Heart right ventricle (tissue), 16 donors: ENCODE measurements at regions of chr19 and their contacts with region 1.

Region 1: GRCh38 chr19:5880604-5881078 is 10.3 kb upstream of the FUT5 start:
- DNase-seq: peak; percentile 75 to 76
- ATAC-seq: peak; percentile 74 to 98 (median 92)
- H3K4me3 ChIP-seq: no peak overlapping the region
- H3K27ac ChIP-seq: peak overlapping the region in 7 of 10 donors; percentile 11 to 76 (median 39)
- H3K4me1 ChIP-seq: peaks cover 0 to 15% (median 9%) of the 10 kb centered on the region in 9 donors
- H3K27me3 ChIP-seq: peaks cover 0 to 19% (median 12%) of the 10 kb centered on the region in 7 donors
- CTCF ChIP-seq: no peak

Region 2: GRCh38 chr19:5827891-5828660 is 52.6 kb before region 1 on chr19:
- intact Hi-C with region 1: loop called in 3 of 10 experiments (anchors 5 to 10 kb)
- DNase-seq: peak; percentile 81 to 84
- ATAC-seq: peak; percentile 72 to 84 (median 82)
- H3K4me3 ChIP-seq: peak overlapping the region; percentile 6 to 63 (median 39)
- H3K27ac ChIP-seq: peak overlapping the region in 9 of 10 donors; percentile 50 to 89 (median 75)
- H3K4me1 ChIP-seq: peaks cover 0 to 25% (median 3%) of the 10 kb centered on the region in 9 donors
- H3K27me3 ChIP-seq: peaks cover 0 to 39% (median 27%) of the 10 kb centered on the region in 7 donors
- CTCF ChIP-seq: no peak

Region 3: GRCh38 chr19:5839065-5840017 is 41.3 kb before region 1 on chr19 and contains the start of gene FUT6:
- intact Hi-C with region 1: loop called in 2 of 10 experiments (anchors 5 to 10 kb)
- DNase-seq: no peak
- ATAC-seq: peak in 1 of 8 donors; percentile 13
- H3K4me3 ChIP-seq: no peak within 1 kb of the TSS
- H3K27ac ChIP-seq: no peak within 1 kb of the TSS
- H3K4me1 ChIP-seq: peaks cover 0 to 7% (median 0%) of the 10 kb centered on the region in 9 donors
- H3K27me3 ChIP-seq: no peaks in the 10 kb centered on the region
- CTCF ChIP-seq: no peak
- total RNA-seq, gene FUT6: not detected